AG04449 (cell line): ENCODE measurements at regions of chr16 and their contacts with region 1.

Region 1: DNA sequence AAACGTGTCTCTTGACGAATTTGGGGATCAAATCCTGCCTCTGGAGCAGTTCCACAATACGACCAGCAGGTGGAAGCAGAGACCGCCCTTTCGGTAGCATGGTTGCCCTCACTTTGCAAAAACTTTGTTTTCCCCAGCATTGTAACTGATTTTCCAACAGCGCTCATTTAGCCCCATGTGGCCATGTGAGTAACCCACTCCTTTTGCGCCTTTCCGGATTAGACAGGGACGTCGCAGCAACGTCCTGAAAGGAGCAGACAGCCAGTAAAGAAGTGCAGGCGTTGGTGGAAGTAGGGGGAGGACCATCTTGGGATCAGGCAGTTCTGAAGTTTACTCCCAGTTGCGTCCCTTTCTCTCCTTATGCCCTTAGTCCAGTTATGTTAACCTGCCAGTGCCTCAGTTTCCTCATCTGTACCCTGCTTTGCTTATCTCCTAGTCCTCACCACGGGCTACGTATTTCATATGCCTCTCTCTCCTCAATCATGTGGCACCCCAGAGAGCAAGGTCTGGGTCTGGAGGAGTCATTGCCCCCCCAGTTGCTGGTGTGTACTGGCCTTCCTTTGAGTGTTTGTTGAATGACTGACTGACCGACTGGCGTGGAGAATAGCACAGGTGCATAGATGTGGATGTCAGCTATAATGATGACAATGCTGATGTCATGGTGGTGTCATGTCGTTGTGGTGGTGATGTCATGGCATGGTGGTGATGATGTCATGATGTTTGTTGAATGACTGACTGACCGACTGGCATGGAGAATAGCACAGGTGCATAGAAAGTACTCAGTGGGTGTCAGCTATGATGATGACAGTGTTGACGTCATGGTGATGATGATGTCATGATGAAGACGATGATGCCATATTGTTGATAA is 22.3 kb downstream of the TMEM114 start:
- DNase-seq: peak; percentile 36
- H3K4me3 ChIP-seq: no peak overlapping the region
- CTCF ChIP-seq: peak; percentile 87

Region 2: GRCh38 chr16:8278181-8278580 is 289.8 kb before region 1 on chr16:
- CTCF ChIA-PET with region 1: no interaction called
- POLR2A ChIA-PET with region 1: no interaction called
- DNase-seq: no peak
- H3K4me3 ChIP-seq: no peak overlapping the region
- CTCF ChIP-seq: no peak

Region 3: DNA sequence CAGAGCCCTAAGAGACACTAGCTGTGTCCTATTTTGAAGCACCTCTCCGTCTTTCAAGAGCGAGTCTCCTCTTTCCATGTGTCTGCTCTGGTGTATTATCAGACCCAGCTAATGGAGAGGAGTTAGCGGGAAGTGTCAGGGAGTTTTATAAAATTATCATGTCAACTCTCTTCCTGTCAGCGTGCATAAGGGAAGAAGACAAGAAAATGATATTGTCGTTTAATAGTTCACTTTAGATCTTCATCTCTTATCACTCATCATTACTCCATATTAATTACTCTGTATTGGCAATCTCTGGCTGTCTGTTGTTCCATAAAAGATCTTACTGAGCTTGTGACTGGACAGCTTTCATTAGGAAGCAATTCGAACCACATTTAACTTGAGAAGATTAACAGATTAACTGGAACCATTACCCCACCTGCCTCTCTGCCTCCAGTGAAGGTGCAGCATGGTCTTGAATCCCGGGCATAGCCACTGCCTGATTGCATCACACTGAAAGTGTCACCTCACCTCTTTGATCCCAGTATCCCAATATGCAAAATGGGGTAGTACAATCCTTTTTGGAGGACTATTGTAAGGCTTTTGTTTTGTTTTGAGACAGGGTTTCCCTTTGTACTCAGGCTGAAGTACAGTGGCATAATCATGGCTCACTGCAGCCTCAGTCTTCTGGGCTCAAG is 98.7 kb before region 1 on chr16:
- CTCF ChIA-PET with region 1: no interaction called
- POLR2A ChIA-PET with region 1: no interaction called
- DNase-seq: no peak
- H3K4me3 ChIP-seq: no peak overlapping the region
- CTCF ChIP-seq: no peak

Region 4: GRCh38 chr16:8581831-8582580 is 14.0 kb after region 1 on chr16:
- CTCF ChIA-PET with region 1: interaction called, 18 read pairs
- POLR2A ChIA-PET with region 1: no interaction called
- DNase-seq: no peak
- H3K4me3 ChIP-seq: no peak overlapping the region
- CTCF ChIP-seq: no peak

Region 5: DNA sequence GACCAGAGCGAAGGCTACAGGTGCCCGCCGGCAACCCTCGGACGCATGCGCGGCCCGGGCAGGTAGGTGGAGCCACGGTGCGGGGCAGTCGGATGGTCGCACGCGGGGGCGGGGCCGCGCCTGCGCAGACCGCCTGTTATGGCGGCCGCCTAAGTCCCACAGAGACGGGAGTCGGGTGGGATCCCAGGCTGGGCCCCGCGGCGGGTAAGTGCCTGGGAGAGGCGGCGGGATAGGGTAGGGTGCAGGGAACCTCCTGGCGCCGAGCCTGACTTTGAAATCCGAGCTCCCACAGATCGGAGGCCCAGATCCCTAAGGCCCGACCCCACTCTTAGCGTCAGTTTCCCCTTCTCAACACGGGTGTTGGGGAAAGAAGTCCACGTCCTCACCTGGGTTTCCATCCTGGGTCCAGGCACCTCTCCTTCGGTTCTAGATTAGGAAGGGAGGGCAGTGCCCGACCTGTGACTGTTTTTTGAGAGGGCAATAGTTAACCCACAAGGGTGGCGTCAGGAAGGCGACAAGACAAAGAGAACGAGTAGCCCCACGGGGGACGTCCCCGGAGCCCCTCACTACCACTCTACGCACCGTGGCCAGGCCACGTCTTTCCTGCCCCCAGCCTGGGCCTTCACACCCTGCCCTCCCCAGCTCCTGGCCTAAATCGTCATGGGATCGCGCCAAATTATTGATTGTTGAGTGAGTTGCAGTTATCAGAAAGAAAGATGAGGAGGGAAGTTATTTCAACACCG is 53.8 kb after region 1 on chr16 and contains the start of gene METTL22:
- CTCF ChIA-PET with region 1: interaction called, 43 read pairs
- POLR2A ChIA-PET with region 1: no interaction called
- DNase-seq: peak; percentile 10
- H3K4me3 ChIP-seq: peak within 1 kb of the TSS; percentile 99
- CTCF ChIP-seq: no peak

Region 6: GRCh38 chr16:8634991-8635736 is 67.2 kb after region 1 on chr16:
- CTCF ChIA-PET with region 1: interaction called, 27 read pairs
- POLR2A ChIA-PET with region 1: interaction called, 3 read pairs
- DNase-seq: no peak
- H3K4me3 ChIP-seq: no peak overlapping the region
- CTCF ChIP-seq: peak; percentile 63

Region 7: DNA sequence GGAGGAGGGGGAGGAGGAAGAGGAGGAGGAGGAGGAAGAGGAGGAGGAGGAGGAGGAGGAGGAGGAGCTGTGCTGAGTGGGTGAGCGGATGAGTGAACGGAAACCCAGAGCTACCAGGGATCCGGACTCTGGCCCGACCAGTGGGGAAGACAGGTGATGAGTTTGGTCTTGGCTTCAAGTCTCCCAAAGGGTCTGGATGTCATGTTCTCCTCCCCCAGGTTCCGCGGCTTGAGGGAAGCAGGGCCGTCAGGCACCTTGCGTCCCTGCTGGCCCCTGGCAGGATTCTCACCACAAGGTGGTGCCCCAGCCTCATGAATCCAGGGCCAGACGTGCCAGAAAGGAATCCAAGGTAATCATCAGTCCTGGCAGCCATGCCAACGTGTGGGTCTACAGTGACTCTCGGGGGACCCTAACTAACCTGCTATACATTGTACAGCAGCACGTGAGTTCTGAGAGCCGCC is 92.9 kb after region 1 on chr16:
- CTCF ChIA-PET with region 1: interaction called, 114 read pairs
- POLR2A ChIA-PET with region 1: no interaction called
- DNase-seq: peak; percentile 9
- H3K4me3 ChIP-seq: peak overlapping the region; percentile 20; the same call in 1 of the 2 replicates
- CTCF ChIP-seq: peak; percentile 88

Region 8: DNA sequence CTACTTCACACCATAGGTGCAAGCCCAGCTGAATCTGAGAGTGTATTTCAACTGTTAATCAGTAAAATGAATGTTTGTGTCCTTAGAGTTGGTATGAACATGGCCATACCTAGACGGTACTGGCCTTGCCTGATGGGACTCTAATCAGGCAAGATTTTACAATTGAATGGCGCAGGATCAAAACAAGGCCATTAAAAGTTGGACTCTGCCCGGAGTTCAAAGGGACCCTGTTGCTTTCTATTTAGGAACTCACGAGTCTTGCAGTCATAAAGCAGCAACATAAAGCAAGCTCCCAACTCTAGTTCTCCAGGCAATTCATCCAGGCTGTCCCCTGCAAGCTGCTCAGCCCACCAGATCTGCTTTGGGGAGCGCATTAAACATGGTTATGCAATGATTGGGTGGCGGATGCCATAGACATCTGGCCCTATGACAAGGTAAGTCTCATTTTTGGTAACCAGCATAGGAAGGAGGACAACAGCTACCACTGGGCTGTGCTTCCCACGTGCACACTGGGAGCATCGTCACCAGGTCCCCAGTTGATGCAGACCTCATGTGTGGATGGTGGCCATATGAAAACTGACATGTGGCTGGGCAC is 220.7 kb after region 1 on chr16:
- CTCF ChIA-PET with region 1: interaction called, 40 read pairs
- POLR2A ChIA-PET with region 1: no interaction called
- DNase-seq: no peak
- H3K4me3 ChIP-seq: no peak overlapping the region
- CTCF ChIP-seq: no peak

Region 9: GRCh38 chr16:8797364-8798173 is 229.6 kb after region 1 on chr16 and contains the starts of genes PMM2 and TMEM186:
- CTCF ChIA-PET with region 1: interaction called, 40 read pairs
- POLR2A ChIA-PET with region 1: no interaction called
- DNase-seq: peak; percentile 73
- H3K4me3 ChIP-seq: peak within 1 kb of the TSS; percentile 98
- CTCF ChIP-seq: no peak